ENCODE measurements at regions of chr5 and their contacts with region 1.

Region 1: GRCh38 chr5:142108432-142109330 is at the start of gene NDFIP1:
- DNase-seq: peak; percentile 80 to 93 (median 91)
- ATAC-seq: peak; percentile 89
- H3K4me3 ChIP-seq: peak within 1 kb of the TSS; percentile 75
- H3K4me3 Mint-ChIP-seq: peak within 1 kb of the TSS; percentile 94 to 100 (median 98)
- H3K27ac ChIP-seq: peak within 1 kb of the TSS; percentile 99
- H3K27ac Mint-ChIP-seq: peak within 1 kb of the TSS; percentile 92 to 100 (median 98)
- H3K4me1 ChIP-seq: peaks cover 28 to 64% of the 10 kb centered on the region in 2 donors
- H3K4me1 Mint-ChIP-seq: peaks cover 38 to 78% (median 71%) of the 10 kb centered on the region in 7 donors
- H3K27me3 ChIP-seq: no peaks in the 10 kb centered on the region
- H3K27me3 Mint-ChIP-seq: no peaks in the 10 kb centered on the region
- total RNA-seq, gene NDFIP1: 53.0 to 136 (median 95.5) TPM

Region 2: DNA sequence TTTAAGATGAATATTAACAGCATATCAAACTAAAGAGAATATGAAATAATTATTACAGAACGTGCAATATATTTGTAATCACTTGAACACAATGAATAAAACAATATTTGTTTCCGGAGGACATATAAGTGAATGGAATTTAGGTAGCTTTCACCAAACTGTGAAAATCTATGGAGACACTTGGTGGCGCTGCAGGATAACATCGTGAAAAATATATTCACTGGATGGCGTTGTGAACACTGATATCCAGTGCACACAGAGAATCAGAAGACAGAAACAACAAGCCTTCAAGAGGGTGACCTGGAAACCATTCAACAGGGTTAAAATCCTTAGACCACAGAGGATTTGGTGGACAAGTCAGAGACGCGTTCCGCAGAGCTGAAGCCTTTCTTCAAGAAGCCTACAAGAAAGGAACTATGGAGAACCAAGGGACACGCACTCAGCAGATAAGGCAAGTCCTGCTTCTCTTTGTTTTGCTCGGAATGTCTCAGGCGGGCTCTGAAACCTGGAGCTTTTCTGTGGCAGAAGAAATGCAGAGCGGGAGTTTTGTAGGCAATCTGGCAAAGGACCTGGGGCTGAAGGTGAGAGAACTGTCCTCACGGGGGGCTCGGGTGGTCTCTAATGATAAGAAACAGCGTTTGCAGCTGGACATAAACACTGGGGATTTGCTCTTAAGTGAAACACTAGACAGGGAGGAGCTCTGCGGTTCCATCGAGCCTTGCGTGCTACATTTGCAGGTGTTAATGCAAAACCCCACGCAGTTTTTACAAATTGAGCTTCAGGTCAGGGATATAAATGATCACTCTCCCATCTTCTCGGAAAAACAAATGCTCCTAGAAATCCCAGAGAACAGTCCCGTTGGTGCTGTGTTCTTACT is 909.1 kb before region 1 on chr5 and contains the start of gene PCDHB11:
- CTCF ChIA-PET with region 1: no interaction called
- POLR2A ChIA-PET with region 1: no interaction called
- intact Hi-C with region 1: no loop called
- DNase-seq: no peak
- ATAC-seq: no peak
- H3K4me3 ChIP-seq: no peak within 1 kb of the TSS
- H3K4me3 Mint-ChIP-seq: no peak within 1 kb of the TSS
- H3K27ac ChIP-seq: no peak within 1 kb of the TSS
- H3K27ac Mint-ChIP-seq: no peak within 1 kb of the TSS
- H3K4me1 ChIP-seq: no peaks in the 10 kb centered on the region
- H3K4me1 Mint-ChIP-seq: no peaks in the 10 kb centered on the region
- H3K27me3 ChIP-seq: no peaks in the 10 kb centered on the region
- H3K27me3 Mint-ChIP-seq: peaks cover 0 to 77% (median 57%) of the 10 kb centered on the region in 5 donors
- total RNA-seq, gene PCDHB11: not detected

Region 3: GRCh38 chr5:141636413-141637122 is 472.1 kb before region 1 on chr5 and contains the starts of genes HDAC3 and RELL2:
- CTCF ChIA-PET with region 1: no interaction called
- POLR2A ChIA-PET with region 1: no interaction called
- intact Hi-C with region 1: loop called in 1 of 2 experiments (anchors 2 kb)
- DNase-seq: peak; percentile 86 to 99 (median 94)
- ATAC-seq: peak; percentile 98
- H3K4me3 ChIP-seq: peak within 1 kb of the TSS; percentile 81
- H3K4me3 Mint-ChIP-seq: peak within 1 kb of the TSS; percentile 89 to 98 (median 92)
- H3K27ac ChIP-seq: peak within 1 kb of the TSS; percentile 88
- H3K27ac Mint-ChIP-seq: peak within 1 kb of the TSS; percentile 72 to 95 (median 92)
- H3K4me1 ChIP-seq: peaks cover 23 to 24% of the 10 kb centered on the region in 2 donors
- H3K4me1 Mint-ChIP-seq: peaks cover 35 to 56% (median 46%) of the 10 kb centered on the region in 7 donors
- H3K27me3 ChIP-seq: no peaks in the 10 kb centered on the region
- H3K27me3 Mint-ChIP-seq: no peaks in the 10 kb centered on the region
- total RNA-seq, gene HDAC3: 70.0 to 92.8 (median 79.0) TPM
- total RNA-seq, gene RELL2: 14.3 to 21.7 (median 17.5) TPM

Region 4: GRCh38 chr5:141992349-141992963 is 116.2 kb before region 1 on chr5:
- CTCF ChIA-PET with region 1: interaction called, 8 read pairs
- POLR2A ChIA-PET with region 1: interaction called, 5 read pairs
- intact Hi-C with region 1: loop called in 1 of 2 experiments (anchors 1 kb)
- DNase-seq: peak; percentile 49 to 77 (median 69)
- ATAC-seq: peak; percentile 88
- H3K4me3 ChIP-seq: no peak overlapping the region
- H3K4me3 Mint-ChIP-seq: no peak overlapping the region
- H3K27ac ChIP-seq: no peak overlapping the region
- H3K27ac Mint-ChIP-seq: peak overlapping the region in 2 of 9 donors; percentile 52 to 71
- H3K4me1 ChIP-seq: no peaks in the 10 kb centered on the region
- H3K4me1 Mint-ChIP-seq: peaks cover 4 to 18% (median 7%) of the 10 kb centered on the region in 7 donors
- H3K27me3 ChIP-seq: no peaks in the 10 kb centered on the region
- H3K27me3 Mint-ChIP-seq: no peaks in the 10 kb centered on the region

Region 5: DNA sequence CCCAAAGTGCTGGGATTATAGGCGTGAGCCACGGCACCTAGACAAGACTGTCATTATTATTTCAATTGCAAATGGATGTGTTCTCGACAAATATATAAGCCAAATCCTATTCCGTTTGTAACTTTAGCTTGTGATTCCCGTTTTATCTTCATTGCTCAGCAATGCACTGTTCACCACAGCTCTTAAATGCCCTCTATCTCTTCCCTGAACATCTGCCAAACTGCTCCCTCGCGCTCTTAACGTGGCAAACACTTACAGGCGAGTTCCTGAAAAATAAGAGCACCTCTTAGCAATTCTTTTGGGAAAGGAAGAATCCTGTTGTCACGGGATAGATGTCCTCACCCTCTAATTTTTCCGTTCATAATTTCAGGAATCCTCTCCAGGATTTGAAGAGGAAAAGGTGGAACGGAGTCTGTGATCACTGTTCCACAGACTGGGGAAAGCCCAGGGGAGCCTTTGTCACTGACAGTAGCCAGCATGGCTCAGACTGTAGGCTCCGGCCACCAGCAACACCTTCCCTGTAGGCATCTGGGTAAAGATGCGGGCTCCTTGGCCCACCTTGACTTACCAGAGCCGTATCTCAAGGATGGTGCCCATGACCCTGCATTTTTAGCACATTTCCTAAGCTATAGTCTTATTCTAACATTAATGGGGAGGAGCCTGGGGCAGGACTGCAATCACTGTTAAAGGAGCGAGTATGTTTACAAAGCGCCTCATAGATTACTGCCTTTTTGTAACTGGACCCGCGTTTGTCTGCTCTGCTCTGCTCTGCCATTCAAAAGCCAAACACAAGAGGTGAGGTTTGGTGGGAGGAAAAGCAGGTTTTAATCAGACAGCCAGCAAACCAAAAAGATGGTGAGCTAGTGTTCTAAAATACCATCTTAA is 75.7 kb before region 1 on chr5:
- CTCF ChIA-PET with region 1: interaction called, 3 read pairs
- POLR2A ChIA-PET with region 1: interaction called, 16 read pairs
- intact Hi-C with region 1: no loop called
- DNase-seq: no peak
- ATAC-seq: no peak
- H3K4me3 ChIP-seq: no peak overlapping the region
- H3K4me3 Mint-ChIP-seq: peak overlapping the region in 1 of 10 donors; percentile 43
- H3K27ac ChIP-seq: no peak overlapping the region
- H3K27ac Mint-ChIP-seq: peak overlapping the region in 6 of 9 donors; percentile 13 to 83 (median 69)
- H3K4me1 ChIP-seq: peaks cover 0 to 20% of the 10 kb centered on the region in 2 donors
- H3K4me1 Mint-ChIP-seq: peaks cover 8 to 32% (median 20%) of the 10 kb centered on the region in 7 donors
- H3K27me3 ChIP-seq: no peaks in the 10 kb centered on the region
- H3K27me3 Mint-ChIP-seq: no peaks in the 10 kb centered on the region

Region 6: GRCh38 chr5:142095651-142096330 is 12.9 kb before region 1 on chr5:
- CTCF ChIA-PET with region 1: interaction called, 20 read pairs
- POLR2A ChIA-PET with region 1: interaction called, 127 read pairs
- intact Hi-C with region 1: loop called (anchors 1 kb)
- DNase-seq: peak; percentile 33 to 96 (median 92)
- ATAC-seq: peak; percentile 97
- H3K4me3 ChIP-seq: peak overlapping the region; percentile 3
- H3K4me3 Mint-ChIP-seq: peak overlapping the region; percentile 49 to 85 (median 70)
- H3K27ac ChIP-seq: peak overlapping the region; percentile 88
- H3K27ac Mint-ChIP-seq: peak overlapping the region; percentile 79 to 100 (median 96)
- H3K4me1 ChIP-seq: peaks cover 22 to 66% of the 10 kb centered on the region in 2 donors
- H3K4me1 Mint-ChIP-seq: peaks cover 25 to 97% (median 80%) of the 10 kb centered on the region in 7 donors
- H3K27me3 ChIP-seq: no peaks in the 10 kb centered on the region
- H3K27me3 Mint-ChIP-seq: no peaks in the 10 kb centered on the region

Region 7: GRCh38 chr5:142145106-142145900 is 36.6 kb after region 1 on chr5:
- CTCF ChIA-PET with region 1: interaction called, 7 read pairs
- POLR2A ChIA-PET with region 1: interaction called, 19 read pairs
- intact Hi-C with region 1: loop called (anchors 1 kb)
- DNase-seq: peak in 8 of 9 donors; percentile 38 to 67 (median 58)
- ATAC-seq: peak; percentile 89
- H3K4me3 ChIP-seq: no peak overlapping the region
- H3K4me3 Mint-ChIP-seq: no peak overlapping the region
- H3K27ac ChIP-seq: no peak overlapping the region
- H3K27ac Mint-ChIP-seq: no peak overlapping the region
- H3K4me1 ChIP-seq: no peaks in the 10 kb centered on the region
- H3K4me1 Mint-ChIP-seq: peaks cover 0 to 17% (median 5%) of the 10 kb centered on the region in 7 donors
- H3K27me3 ChIP-seq: no peaks in the 10 kb centered on the region
- H3K27me3 Mint-ChIP-seq: no peaks in the 10 kb centered on the region

Region 8: DNA sequence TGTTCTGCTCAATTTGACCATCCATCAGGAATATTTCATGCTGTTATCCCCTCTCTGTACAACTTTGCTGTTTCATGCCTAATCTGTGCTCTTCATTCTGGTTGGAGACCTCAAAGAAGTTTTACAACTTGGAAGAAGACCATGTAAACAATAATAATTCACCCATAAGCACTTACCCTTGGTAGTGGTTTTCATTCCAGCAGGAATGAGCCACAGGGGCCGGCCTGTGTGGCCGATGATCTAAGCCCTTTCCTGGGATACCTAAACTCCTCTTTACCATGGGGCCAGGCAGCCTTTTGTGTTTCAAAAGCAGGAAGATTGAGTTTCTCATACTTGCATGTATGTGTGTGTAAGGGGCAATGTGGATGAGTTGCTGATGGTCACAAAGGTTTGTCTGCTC is 412.2 kb after region 1 on chr5:
- CTCF ChIA-PET with region 1: no interaction called
- POLR2A ChIA-PET with region 1: no interaction called
- intact Hi-C with region 1: no loop called
- DNase-seq: no peak
- ATAC-seq: no peak
- H3K4me3 ChIP-seq: no peak overlapping the region
- H3K4me3 Mint-ChIP-seq: no peak overlapping the region
- H3K27ac ChIP-seq: no peak overlapping the region
- H3K27ac Mint-ChIP-seq: no peak overlapping the region
- H3K4me1 ChIP-seq: no peaks in the 10 kb centered on the region
- H3K4me1 Mint-ChIP-seq: peaks cover 0 to 2% (median 0%) of the 10 kb centered on the region in 7 donors
- H3K27me3 ChIP-seq: no peaks in the 10 kb centered on the region
- H3K27me3 Mint-ChIP-seq: peaks cover 0 to 6% (median 0%) of the 10 kb centered on the region in 5 donors

Region 9: DNA sequence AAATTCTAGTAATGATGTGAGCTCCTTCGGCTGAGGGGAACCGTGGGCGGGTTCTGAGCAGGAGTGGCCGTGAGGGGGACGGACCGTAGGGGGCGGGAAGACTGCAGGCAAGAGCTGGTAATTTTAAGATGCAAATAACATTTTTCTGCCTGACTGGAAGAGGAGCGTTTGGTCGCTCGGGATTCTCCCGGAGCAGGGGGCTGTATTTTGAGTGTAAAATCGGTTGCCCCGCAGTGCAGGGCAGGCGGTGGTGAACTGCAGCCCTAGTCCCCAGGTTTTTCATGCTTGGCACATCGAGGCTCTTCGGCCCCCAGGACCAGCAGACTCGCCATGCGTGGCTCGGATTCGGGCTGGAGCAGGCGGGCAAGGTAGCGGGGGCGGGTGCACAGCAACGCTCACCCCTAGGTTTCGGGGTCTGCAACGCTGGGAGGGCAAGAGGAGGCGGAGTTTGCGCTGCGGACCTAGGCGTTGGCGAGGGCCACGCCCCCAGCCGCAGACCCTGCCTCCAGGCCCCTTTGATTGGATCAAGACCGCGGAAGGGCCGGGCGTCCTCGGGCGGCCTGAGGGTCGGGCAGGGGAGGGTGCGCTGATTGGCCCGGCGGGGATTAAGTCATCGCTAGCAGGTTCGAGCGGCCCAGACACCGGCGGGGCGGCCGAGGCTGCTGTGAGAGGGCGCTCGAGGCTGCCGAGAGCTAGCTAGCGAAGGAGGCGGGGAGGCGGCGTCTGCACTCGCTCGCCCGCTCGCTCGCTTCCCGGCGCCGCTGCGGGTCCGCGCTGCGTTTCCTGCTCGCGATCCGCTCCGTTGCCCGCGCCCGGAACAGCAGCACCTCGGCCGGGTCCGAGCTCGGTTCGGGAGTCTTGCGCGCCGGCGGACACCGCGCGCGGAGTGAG is 661.3 kb after region 1 on chr5 and contains the start of gene ARHGAP26:
- CTCF ChIA-PET with region 1: no interaction called
- POLR2A ChIA-PET with region 1: no interaction called
- intact Hi-C with region 1: loop called in 1 of 2 experiments (anchors 2 kb)
- DNase-seq: peak; percentile 82 to 93 (median 87)
- ATAC-seq: peak; percentile 94
- H3K4me3 ChIP-seq: peak within 1 kb of the TSS; percentile 86
- H3K4me3 Mint-ChIP-seq: peak within 1 kb of the TSS; percentile 87 to 100 (median 96)
- H3K27ac ChIP-seq: peak within 1 kb of the TSS; percentile 77
- H3K27ac Mint-ChIP-seq: peak within 1 kb of the TSS; percentile 89 to 98 (median 92)
- H3K4me1 ChIP-seq: peaks cover 9 to 15% of the 10 kb centered on the region in 2 donors
- H3K4me1 Mint-ChIP-seq: peaks cover 30 to 39% (median 35%) of the 10 kb centered on the region in 7 donors
- H3K27me3 ChIP-seq: no peaks in the 10 kb centered on the region
- H3K27me3 Mint-ChIP-seq: peaks cover 0 to 3% (median 0%) of the 10 kb centered on the region in 5 donors
- total RNA-seq, gene ARHGAP26: 20.1 to 123 (median 29.1) TPM

Measured in naive thymus-derived CD4-positive, alpha-beta T cell (primary cell).